ENCODE measurements at regions of chr6 and their contacts with region 1.

Region 1: GRCh38 chr6:136792410-136793262 is at the start of gene MAP3K5:
- DNase-seq: peak; percentile 94 to 95 (median 94)
- H3K4me3 ChIP-seq: peak within 1 kb of the TSS; percentile 68 to 100
- H3K4me3 Mint-ChIP-seq: peak within 1 kb of the TSS; percentile 94 to 100 (median 97)
- H3K27ac ChIP-seq: peak within 1 kb of the TSS; percentile 99
- H3K27ac Mint-ChIP-seq: peak within 1 kb of the TSS; percentile 93 to 98 (median 97)
- H3K4me1 ChIP-seq: peaks cover 41% of the 10 kb centered on the region
- H3K4me1 Mint-ChIP-seq: peaks cover 22 to 49% (median 27%) of the 10 kb centered on the region in 4 donors
- H3K27me3 ChIP-seq: no peaks in the 10 kb centered on the region
- H3K27me3 Mint-ChIP-seq: no peaks in the 10 kb centered on the region
- total RNA-seq, gene MAP3K5: 31.4 to 31.7 TPM

Region 2: DNA sequence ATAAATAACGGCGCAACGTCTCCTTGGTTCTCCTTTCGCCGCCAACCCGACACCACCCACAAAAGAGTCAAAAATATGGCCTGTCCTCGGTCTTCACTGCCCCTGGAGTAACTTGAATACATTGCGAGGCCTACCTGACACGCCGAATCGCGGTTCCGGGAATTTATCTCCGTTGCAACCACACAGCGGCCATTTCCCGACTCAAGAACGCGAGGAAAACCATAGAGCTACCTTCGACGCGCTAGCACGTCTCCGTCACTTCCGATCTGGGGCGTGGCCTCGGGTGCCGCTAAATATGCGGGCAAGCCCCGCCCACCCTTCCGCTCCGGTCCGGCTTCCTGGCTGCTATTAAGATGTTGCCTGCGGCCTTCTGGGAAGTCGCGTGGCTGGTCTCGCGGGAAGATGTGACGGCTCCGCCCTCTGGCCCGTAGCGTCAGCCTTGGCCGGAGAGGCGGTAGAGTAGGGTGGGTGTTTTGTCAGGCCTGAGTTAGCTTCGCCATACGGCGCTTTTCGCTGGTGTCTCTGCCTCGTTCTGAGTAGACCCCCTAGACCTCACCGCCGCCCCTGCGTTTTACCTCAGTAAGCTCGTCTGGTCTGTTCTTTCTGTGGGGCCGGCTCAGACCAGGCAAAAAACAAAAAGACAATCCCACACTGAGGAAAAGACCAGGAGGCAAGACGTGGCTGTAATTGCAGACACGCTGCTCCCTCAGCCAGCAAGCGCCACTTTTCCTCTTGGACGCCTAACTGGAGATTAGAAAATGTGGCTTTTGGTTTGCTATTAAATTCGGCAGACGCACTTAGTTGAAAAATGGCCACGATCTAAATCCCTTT is 502.8 kb before region 1 on chr6 and contains the start of gene BCLAF1:
- CTCF ChIA-PET with region 1: interaction called, 3 read pairs
- POLR2A ChIA-PET with region 1: interaction called, 15 read pairs
- intact Hi-C with region 1: loop called (anchors 10 kb)
- DNase-seq: peak; percentile 99 to 100 (median 100)
- H3K4me3 ChIP-seq: peak within 1 kb of the TSS; percentile 92 to 94
- H3K4me3 Mint-ChIP-seq: peak within 1 kb of the TSS; percentile 93 to 100 (median 100)
- H3K27ac ChIP-seq: peak within 1 kb of the TSS; percentile 100
- H3K27ac Mint-ChIP-seq: peak within 1 kb of the TSS; percentile 99 to 100 (median 100)
- H3K4me1 ChIP-seq: peaks cover 56% of the 10 kb centered on the region
- H3K4me1 Mint-ChIP-seq: peaks cover 22 to 72% (median 47%) of the 10 kb centered on the region in 4 donors
- H3K27me3 ChIP-seq: no peaks in the 10 kb centered on the region
- H3K27me3 Mint-ChIP-seq: peaks cover 5% of the 10 kb centered on the region in 2 donors
- total RNA-seq, gene BCLAF1: 233 to 242 TPM

Region 3: DNA sequence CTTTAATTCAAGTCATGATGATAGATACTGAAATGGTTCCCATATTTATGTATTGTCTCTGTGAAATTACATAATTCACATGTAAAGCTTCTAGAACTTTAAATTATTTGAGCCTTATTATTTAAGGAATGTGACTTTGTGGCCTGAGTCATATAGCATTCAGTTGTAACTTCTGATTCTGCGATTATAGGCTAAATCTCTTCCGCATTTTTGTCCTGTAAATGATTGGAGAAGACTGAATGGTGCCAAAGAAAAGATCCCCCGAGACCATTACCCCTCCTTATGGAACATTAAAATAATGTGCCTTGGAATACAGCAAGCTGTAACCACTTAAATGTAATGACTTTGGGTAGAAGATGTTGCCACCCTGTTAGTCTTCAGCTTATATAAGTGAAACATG is 179.2 kb before region 1 on chr6:
- CTCF ChIA-PET with region 1: interaction called, 33 read pairs
- POLR2A ChIA-PET with region 1: interaction called, 4 read pairs
- intact Hi-C with region 1: loop called (anchors 1 kb)
- DNase-seq: no peak
- H3K4me3 ChIP-seq: no peak overlapping the region
- H3K4me3 Mint-ChIP-seq: no peak overlapping the region
- H3K27ac ChIP-seq: no peak overlapping the region
- H3K27ac Mint-ChIP-seq: peak overlapping the region in 1 of 7 donors; percentile 31
- H3K4me1 ChIP-seq: no peaks in the 10 kb centered on the region
- H3K4me1 Mint-ChIP-seq: peaks cover 4 to 18% (median 6%) of the 10 kb centered on the region in 4 donors
- H3K27me3 ChIP-seq: no peaks in the 10 kb centered on the region
- H3K27me3 Mint-ChIP-seq: no peaks in the 10 kb centered on the region

Region 4: GRCh38 chr6:136669299-136669699 is 123.3 kb before region 1 on chr6:
- CTCF ChIA-PET with region 1: interaction called, 22 read pairs
- POLR2A ChIA-PET with region 1: interaction called, 7 read pairs
- intact Hi-C with region 1: no loop called
- DNase-seq: no peak
- H3K4me3 ChIP-seq: no peak overlapping the region
- H3K4me3 Mint-ChIP-seq: no peak overlapping the region
- H3K27ac ChIP-seq: no peak overlapping the region
- H3K27ac Mint-ChIP-seq: no peak overlapping the region
- H3K4me1 ChIP-seq: no peaks in the 10 kb centered on the region
- H3K4me1 Mint-ChIP-seq: peaks cover 0 to 4% (median 0%) of the 10 kb centered on the region in 4 donors
- H3K27me3 ChIP-seq: no peaks in the 10 kb centered on the region
- H3K27me3 Mint-ChIP-seq: no peaks in the 10 kb centered on the region

Region 5: GRCh38 chr6:136706420-136706819 is 86.2 kb before region 1 on chr6:
- CTCF ChIA-PET with region 1: interaction called, 50 read pairs
- POLR2A ChIA-PET with region 1: interaction called, 5 read pairs
- intact Hi-C with region 1: no loop called
- DNase-seq: no peak
- H3K4me3 ChIP-seq: no peak overlapping the region
- H3K4me3 Mint-ChIP-seq: no peak overlapping the region
- H3K27ac ChIP-seq: no peak overlapping the region
- H3K27ac Mint-ChIP-seq: peak overlapping the region in 2 of 7 donors; percentile 27 to 50
- H3K4me1 ChIP-seq: no peaks in the 10 kb centered on the region
- H3K4me1 Mint-ChIP-seq: peaks cover 24 to 27% (median 25%) of the 10 kb centered on the region in 4 donors
- H3K27me3 ChIP-seq: no peaks in the 10 kb centered on the region
- H3K27me3 Mint-ChIP-seq: no peaks in the 10 kb centered on the region

Region 6: DNA sequence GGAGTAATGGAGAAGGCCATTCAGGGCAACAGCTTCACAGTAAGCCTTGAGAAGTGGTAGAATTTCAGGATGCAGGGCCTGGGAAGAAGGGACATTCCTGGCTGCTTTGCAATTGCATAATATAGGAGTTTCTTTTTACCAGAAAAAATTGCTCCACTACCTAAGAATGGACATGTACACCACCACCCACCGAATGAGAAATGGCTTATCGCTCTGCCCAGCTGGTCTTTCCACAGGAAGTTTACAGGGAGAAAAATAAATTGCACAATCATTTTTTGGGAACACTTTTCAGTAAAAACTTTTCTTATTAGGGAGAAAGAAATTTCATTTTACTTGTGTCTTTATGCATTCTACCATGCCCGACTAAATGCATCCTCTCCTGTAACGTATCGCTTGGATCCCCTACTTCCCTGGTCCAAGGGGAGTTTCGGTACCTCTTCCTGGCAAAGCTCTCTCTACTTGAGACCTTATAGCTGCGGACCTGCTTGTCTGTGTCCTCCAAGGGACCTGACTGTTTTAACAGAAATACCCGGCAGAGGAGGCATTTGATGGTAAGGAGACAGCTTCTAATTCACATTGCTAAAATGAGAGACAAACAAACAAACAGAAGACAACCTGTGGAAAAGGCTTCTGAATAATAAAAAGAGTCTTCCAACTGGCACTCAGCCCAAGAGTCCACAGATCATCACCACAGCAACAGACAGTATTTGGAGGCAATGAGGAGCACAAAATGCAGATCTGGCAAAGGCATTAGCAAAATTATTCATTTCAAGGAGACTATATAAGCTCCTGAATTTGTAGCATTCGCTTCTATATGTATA is 54.6 kb before region 1 on chr6:
- CTCF ChIA-PET with region 1: interaction called, 156 read pairs
- POLR2A ChIA-PET with region 1: interaction called, 49 read pairs
- intact Hi-C with region 1: loop called (anchors 1 kb)
- DNase-seq: no peak
- H3K4me3 ChIP-seq: no peak overlapping the region
- H3K4me3 Mint-ChIP-seq: no peak overlapping the region
- H3K27ac ChIP-seq: no peak overlapping the region
- H3K27ac Mint-ChIP-seq: peak overlapping the region in 1 of 7 donors; percentile 51
- H3K4me1 ChIP-seq: peaks cover 22% of the 10 kb centered on the region
- H3K4me1 Mint-ChIP-seq: peaks cover 33 to 68% (median 55%) of the 10 kb centered on the region in 4 donors
- H3K27me3 ChIP-seq: no peaks in the 10 kb centered on the region
- H3K27me3 Mint-ChIP-seq: no peaks in the 10 kb centered on the region

Region 7: GRCh38 chr6:136772685-136773472 is 19.8 kb before region 1 on chr6:
- CTCF ChIA-PET with region 1: interaction called, 14 read pairs
- POLR2A ChIA-PET with region 1: interaction called, 28 read pairs
- intact Hi-C with region 1: no loop called
- DNase-seq: no peak
- H3K4me3 ChIP-seq: no peak overlapping the region
- H3K4me3 Mint-ChIP-seq: peak overlapping the region in 4 of 8 donors; percentile 41 to 52 (median 46)
- H3K27ac ChIP-seq: no peak overlapping the region
- H3K27ac Mint-ChIP-seq: peak overlapping the region; percentile 23 to 91 (median 74)
- H3K4me1 ChIP-seq: peaks cover 71% of the 10 kb centered on the region
- H3K4me1 Mint-ChIP-seq: peaks cover 52 to 71% (median 60%) of the 10 kb centered on the region in 4 donors
- H3K27me3 ChIP-seq: no peaks in the 10 kb centered on the region
- H3K27me3 Mint-ChIP-seq: no peaks in the 10 kb centered on the region

Region 8: GRCh38 chr6:136914947-136915346 is 122.3 kb after region 1 on chr6:
- CTCF ChIA-PET with region 1: no interaction called
- POLR2A ChIA-PET with region 1: no interaction called
- intact Hi-C with region 1: no loop called
- DNase-seq: no peak
- H3K4me3 ChIP-seq: no peak overlapping the region
- H3K4me3 Mint-ChIP-seq: no peak overlapping the region
- H3K27ac ChIP-seq: no peak overlapping the region
- H3K27ac Mint-ChIP-seq: no peak overlapping the region
- H3K4me1 ChIP-seq: peaks cover 6% of the 10 kb centered on the region
- H3K4me1 Mint-ChIP-seq: peaks cover 0 to 4% (median 3%) of the 10 kb centered on the region in 4 donors
- H3K27me3 ChIP-seq: peaks cover 5% of the 10 kb centered on the region
- H3K27me3 Mint-ChIP-seq: peaks cover 7 to 8% of the 10 kb centered on the region in 2 donors

Measured in CD4-positive, alpha-beta memory T cell (primary cell).